CD8-positive, alpha-beta T cell (primary cell): ENCODE measurements at regions of chr1 and their contacts with region 1.

Region 1: GRCh38 chr1:111481387-111482221 is 7.8 kb downstream of the C1orf162 start:
- DNase-seq: peak in 8 of 9 experiments; percentile 46 to 78 (median 56)
- ATAC-seq: peak; percentile 41
- H3K4me3 ChIP-seq: no peak overlapping the region
- H3K4me3 Mint-ChIP-seq: no peak overlapping the region
- H3K27ac ChIP-seq: no peak overlapping the region
- H3K27ac Mint-ChIP-seq: no peak overlapping the region
- H3K4me1 ChIP-seq: peaks cover 22% of the 10 kb centered on the region
- H3K4me1 Mint-ChIP-seq: peaks cover 40% of the 10 kb centered on the region
- H3K27me3 ChIP-seq: no peaks in the 10 kb centered on the region
- H3K27me3 Mint-ChIP-seq: no peaks in the 10 kb centered on the region
- CTCF ChIP-seq: no peak

Region 2: DNA sequence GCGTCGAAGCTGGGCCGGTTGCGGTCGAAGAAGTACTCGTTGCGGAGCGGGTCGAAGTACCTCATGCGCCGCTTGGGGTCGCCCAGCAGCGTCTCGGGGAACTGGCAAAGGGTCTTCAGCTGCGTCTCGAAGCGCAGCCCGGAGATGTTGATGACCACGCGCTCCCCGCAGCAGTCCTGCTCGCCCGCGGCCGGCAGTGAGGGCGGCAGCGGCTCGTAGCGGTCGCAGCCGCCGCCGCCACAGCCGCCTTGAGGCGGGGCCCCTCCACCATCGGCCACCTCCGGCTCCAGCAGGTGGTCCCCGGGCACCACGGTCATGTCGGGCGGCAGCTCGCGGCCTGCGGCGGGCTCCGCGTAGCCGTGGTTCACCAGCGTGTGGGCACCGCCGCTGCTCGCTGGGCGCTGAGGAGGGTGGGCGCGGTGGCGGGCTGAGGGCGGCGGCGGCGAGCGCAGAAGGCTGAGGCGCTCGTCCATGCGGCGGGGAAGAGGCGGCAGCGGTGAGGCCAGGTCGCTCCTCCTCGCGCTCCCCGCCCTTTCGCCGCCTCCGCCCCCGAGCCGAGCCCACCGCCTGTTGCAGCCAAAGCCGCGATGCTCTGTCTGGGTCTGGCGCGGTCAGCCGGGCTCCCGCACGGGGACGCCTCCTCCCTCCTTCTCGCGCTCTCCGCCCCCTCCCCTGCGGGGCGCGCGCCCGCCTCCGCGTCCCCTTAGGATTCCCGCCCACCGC is 807.1 kb before region 1 on chr1 and contains the start of gene KCNA3:
- CTCF ChIA-PET with region 1: no interaction called
- POLR2A ChIA-PET with region 1: no interaction called
- intact Hi-C with region 1: no loop called
- DNase-seq: peak; percentile 52 to 87 (median 73)
- ATAC-seq: peak; percentile 42
- H3K4me3 ChIP-seq: peak within 1 kb of the TSS; percentile 75 to 97
- H3K4me3 Mint-ChIP-seq: peak within 1 kb of the TSS; percentile 100
- H3K27ac ChIP-seq: peak within 1 kb of the TSS; percentile 93 to 95
- H3K27ac Mint-ChIP-seq: peak within 1 kb of the TSS; percentile 99
- H3K4me1 ChIP-seq: peaks cover 22% of the 10 kb centered on the region
- H3K4me1 Mint-ChIP-seq: peaks cover 40% of the 10 kb centered on the region
- H3K27me3 ChIP-seq: no peaks in the 10 kb centered on the region
- H3K27me3 Mint-ChIP-seq: no peaks in the 10 kb centered on the region
- CTCF ChIP-seq: peak; percentile 28
- total RNA-seq, gene KCNA3: 83.6 to 85.1 TPM

Region 3: DNA sequence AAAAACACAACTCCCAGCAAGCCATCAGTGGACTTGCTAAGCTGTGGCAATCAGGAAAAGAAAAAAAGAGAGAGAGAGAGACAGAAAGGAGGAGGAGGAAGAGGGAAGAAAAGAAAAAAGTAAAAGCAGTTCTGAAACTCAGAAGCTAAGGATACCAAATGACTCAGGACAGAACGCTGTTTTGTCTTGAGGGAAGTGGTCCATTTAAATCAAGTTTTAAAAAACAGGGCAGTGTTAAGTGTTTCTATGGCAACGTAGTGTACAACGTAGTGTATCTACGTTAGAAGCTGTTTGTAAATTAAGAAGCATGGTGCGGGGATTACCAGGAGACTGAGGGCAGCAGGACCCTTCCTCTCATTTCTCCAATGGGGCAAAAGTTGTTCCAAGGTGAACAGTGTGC is 16.0 kb after region 1 on chr1:
- CTCF ChIA-PET with region 1: interaction called, 19 read pairs
- POLR2A ChIA-PET with region 1: interaction called, 3 read pairs
- intact Hi-C with region 1: no loop called
- DNase-seq: no peak
- ATAC-seq: no peak
- H3K4me3 ChIP-seq: no peak overlapping the region
- H3K4me3 Mint-ChIP-seq: no peak overlapping the region
- H3K27ac ChIP-seq: no peak overlapping the region
- H3K27ac Mint-ChIP-seq: no peak overlapping the region
- H3K4me1 ChIP-seq: no peaks in the 10 kb centered on the region
- H3K4me1 Mint-ChIP-seq: peaks cover 5% of the 10 kb centered on the region
- H3K27me3 ChIP-seq: no peaks in the 10 kb centered on the region
- H3K27me3 Mint-ChIP-seq: no peaks in the 10 kb centered on the region
- CTCF ChIP-seq: no peak

Region 4: GRCh38 chr1:111707906-111708305 is 226.3 kb after region 1 on chr1:
- CTCF ChIA-PET with region 1: interaction called, 6 read pairs
- POLR2A ChIA-PET with region 1: no interaction called
- intact Hi-C with region 1: loop called in 1 of 2 experiments (anchors 2 kb)
- DNase-seq: no peak
- ATAC-seq: no peak
- H3K4me3 ChIP-seq: no peak overlapping the region
- H3K4me3 Mint-ChIP-seq: no peak overlapping the region
- H3K27ac ChIP-seq: no peak overlapping the region
- H3K27ac Mint-ChIP-seq: no peak overlapping the region
- H3K4me1 ChIP-seq: no peaks in the 10 kb centered on the region
- H3K4me1 Mint-ChIP-seq: peaks cover 4% of the 10 kb centered on the region
- H3K27me3 ChIP-seq: no peaks in the 10 kb centered on the region
- H3K27me3 Mint-ChIP-seq: no peaks in the 10 kb centered on the region
- CTCF ChIP-seq: no peak

Region 5: GRCh38 chr1:112337028-112337531 is 855.5 kb after region 1 on chr1:
- CTCF ChIA-PET with region 1: no interaction called
- POLR2A ChIA-PET with region 1: no interaction called
- intact Hi-C with region 1: loop called in 1 of 2 experiments (anchors 10 kb)
- DNase-seq: peak in 2 of 9 experiments; percentile 20 to 42
- ATAC-seq: peak; percentile 63
- H3K4me3 ChIP-seq: peak overlapping the region in 1 of 2 experiments; percentile 15
- H3K4me3 Mint-ChIP-seq: peak overlapping the region; percentile 67
- H3K27ac ChIP-seq: no peak overlapping the region
- H3K27ac Mint-ChIP-seq: no peak overlapping the region
- H3K4me1 ChIP-seq: no peaks in the 10 kb centered on the region
- H3K4me1 Mint-ChIP-seq: peaks cover 10% of the 10 kb centered on the region
- H3K27me3 ChIP-seq: no peaks in the 10 kb centered on the region
- H3K27me3 Mint-ChIP-seq: peaks cover 21% of the 10 kb centered on the region
- CTCF ChIP-seq: peak; percentile 47